ENCODE measurements at regions of chr22 and their contacts with region 1.

Region 1: GRCh38 chr22:44625981-44626687 is 75.9 kb upstream of the PRR5 start:
- DNase-seq: peak; percentile 78 to 88
- ATAC-seq: peak; percentile 79
- H3K4me3 ChIP-seq: no peak overlapping the region
- H3K27ac ChIP-seq: no peak overlapping the region
- H3K4me1 ChIP-seq: no peaks in the 10 kb centered on the region
- H3K27me3 ChIP-seq: no peaks in the 10 kb centered on the region

Region 2: DNA sequence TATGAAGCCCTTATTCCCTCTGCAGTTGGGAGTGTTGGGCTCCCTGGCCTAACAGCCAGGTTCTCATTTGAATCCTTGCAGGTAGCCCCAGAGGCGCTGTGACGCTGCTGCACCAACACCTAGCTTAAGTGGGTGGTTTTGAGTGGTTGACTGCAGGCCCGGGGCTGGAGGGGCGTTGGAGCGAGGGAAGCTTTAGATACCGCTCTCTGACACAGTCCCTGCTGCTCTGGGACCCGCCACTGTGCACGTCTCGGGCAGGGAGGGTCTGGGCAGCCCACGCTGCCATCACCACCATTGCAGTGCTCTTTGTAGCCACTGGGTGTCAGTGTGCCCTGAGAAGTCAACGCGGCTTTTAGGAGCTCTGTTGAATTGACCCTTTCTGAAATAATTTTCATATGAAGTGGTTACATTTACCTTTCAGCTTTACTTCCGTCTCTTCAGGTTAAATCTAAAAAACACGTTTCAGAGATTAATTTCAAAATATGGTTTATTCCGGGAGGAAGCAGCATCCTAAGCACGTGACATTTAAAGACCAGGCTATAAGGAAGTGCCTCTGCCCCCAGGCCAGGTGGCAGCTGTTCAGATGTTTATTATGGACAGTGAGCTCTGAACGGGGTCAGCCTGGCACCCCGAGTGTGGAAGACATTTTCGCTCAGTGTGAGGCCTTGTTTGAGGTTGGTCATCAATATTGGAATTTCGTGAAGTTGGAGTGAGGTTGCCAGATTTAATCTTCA is 632.9 kb before region 1 on chr22:
- intact Hi-C with region 1: loop called (anchors 1 to 2 kb)
- DNase-seq: peak in 1 of 2 donors; percentile 58
- ATAC-seq: peak; percentile 81
- H3K4me3 ChIP-seq: no peak overlapping the region
- H3K27ac ChIP-seq: no peak overlapping the region
- H3K4me1 ChIP-seq: no peaks in the 10 kb centered on the region
- H3K27me3 ChIP-seq: no peaks in the 10 kb centered on the region

Measured in aorta (tissue), 5 donors.